ENCODE measurements at regions of chr15 and their contacts with region 1.

Region 1: DNA sequence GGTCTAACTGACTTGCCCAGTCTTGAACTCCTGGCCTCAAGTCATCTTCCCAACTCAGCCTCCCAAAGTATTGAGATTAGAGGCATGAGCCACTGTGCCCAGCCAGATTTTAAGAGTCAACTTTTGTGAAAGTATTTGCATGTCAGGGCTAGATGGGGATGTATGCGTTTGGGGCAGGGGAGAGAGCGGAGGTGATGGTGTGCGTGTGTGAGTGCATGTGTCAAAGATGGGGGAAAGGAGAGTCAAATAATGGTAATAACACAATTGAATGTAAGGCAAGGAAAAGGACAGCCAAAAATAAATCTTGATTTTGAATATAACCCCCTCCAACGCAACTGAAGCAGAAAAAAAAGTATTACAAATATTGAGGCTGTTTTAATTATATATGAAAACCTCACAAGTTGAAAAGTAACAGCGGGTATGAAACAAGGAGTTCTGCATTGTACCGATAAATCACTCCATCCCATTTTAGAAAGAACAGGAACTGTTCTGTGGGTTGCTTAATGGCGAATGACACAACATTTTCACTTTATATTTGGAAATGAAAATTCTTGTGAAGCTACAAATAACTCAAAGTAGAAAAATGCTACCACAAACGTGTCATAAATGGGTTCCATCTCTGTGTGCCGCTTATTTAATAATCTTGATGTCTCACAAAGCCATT is 29.9 kb upstream of the LDHAL6B start:
- DNase-seq: no peak
- H3K4me3 ChIP-seq: no peak overlapping the region
- H3K4me3 Mint-ChIP-seq: no peak overlapping the region
- H3K27ac Mint-ChIP-seq: no peak overlapping the region
- H3K4me1 ChIP-seq: no peaks in the 10 kb centered on the region
- H3K4me1 Mint-ChIP-seq: no peaks in the 10 kb centered on the region
- H3K27me3 ChIP-seq: no peaks in the 10 kb centered on the region
- H3K27me3 Mint-ChIP-seq: no peaks in the 10 kb centered on the region
- CTCF ChIP-seq: no peak

Region 2: DNA sequence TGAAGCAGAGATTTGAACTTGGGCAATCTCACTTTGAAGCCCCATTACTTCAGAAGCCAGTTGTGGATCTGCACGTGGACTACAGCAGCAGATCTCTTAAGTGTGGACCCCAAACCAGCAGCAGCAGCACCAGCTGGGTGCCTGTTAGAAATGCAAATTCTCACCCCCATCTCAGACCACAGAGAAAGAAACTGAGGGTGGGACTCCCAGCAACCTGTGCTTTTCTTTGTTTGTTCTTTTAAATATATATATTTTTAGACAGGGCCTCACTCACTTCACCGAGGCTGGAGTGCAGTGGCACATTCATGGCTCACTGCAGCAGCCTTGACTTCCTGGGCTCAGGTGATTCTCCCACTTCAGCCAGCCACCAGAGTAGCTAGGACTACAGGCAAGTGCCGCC is 296.5 kb before region 1 on chr15:
- CTCF ChIA-PET with region 1: interaction called, 11 read pairs
- POLR2A ChIA-PET with region 1: no interaction called
- intact Hi-C with region 1: no loop called
- DNase-seq: no peak
- H3K4me3 ChIP-seq: no peak overlapping the region
- H3K4me3 Mint-ChIP-seq: no peak overlapping the region
- H3K27ac Mint-ChIP-seq: no peak overlapping the region
- H3K4me1 ChIP-seq: peaks cover 11% of the 10 kb centered on the region
- H3K4me1 Mint-ChIP-seq: peaks cover 10% of the 10 kb centered on the region
- H3K27me3 ChIP-seq: no peaks in the 10 kb centered on the region
- H3K27me3 Mint-ChIP-seq: no peaks in the 10 kb centered on the region
- CTCF ChIP-seq: no peak